Activated CD4-positive, alpha-beta memory T cell treated with anti-CD3 and anti-CD28 coated beads for 36 hours (primary cell): ENCODE measurements at regions of chr15 and their contacts with region 1.

Region 1: GRCh38 chr15:89874926-89875564 is 18.7 kb downstream of the AP3S2 start:
- DNase-seq: peak; percentile 89
- H3K4me3 Mint-ChIP-seq: no peak overlapping the region
- H3K27ac Mint-ChIP-seq: no peak overlapping the region
- H3K4me1 Mint-ChIP-seq: peaks cover 4% of the 10 kb centered on the region
- H3K27me3 Mint-ChIP-seq: no peaks in the 10 kb centered on the region

Region 2: DNA sequence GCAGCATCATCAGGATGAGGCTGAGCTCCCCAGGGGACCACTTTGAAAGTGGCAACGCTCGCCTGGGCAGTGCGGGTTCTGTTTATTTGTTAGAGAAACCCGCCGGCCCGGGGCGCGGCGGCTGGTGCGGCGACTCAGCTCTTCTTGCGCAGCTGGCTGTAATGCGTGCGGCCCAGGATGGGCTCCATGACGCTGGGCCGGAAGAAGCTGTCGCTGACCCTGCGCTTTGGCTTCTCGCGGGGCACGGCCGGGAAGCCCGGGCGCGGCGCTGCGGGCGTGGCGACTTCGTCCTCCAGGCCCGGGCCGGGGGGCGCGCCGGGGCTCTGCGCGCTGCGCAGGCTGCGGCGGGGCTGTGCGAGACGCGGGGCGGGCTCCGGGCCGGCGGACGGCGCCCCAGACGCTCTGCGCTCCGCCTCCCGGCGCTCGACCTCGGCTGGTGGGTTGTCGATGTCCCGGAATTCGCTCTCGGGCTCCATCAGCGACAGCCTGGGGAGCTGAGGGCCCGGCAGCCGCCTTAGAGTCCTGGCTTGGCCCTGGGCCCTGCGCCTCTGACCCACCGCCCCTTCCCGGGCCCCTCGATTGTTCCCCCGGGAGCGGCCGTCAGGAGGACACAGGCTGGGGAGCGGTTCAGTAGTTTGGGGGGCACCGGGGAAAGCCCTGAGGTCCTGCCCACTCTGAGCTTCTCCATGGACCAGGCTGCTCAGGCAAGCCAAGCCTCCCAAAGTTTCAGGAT is 209.4 kb before region 1 on chr15:
- CTCF ChIA-PET with region 1: no interaction called
- POLR2A ChIA-PET with region 1: no interaction called
- intact Hi-C with region 1: no loop called
- DNase-seq: peak; percentile 31
- H3K4me3 Mint-ChIP-seq: no peak overlapping the region
- H3K27ac Mint-ChIP-seq: no peak overlapping the region
- H3K4me1 Mint-ChIP-seq: peaks cover 4% of the 10 kb centered on the region
- H3K27me3 Mint-ChIP-seq: peaks cover 15% of the 10 kb centered on the region

Region 3: DNA sequence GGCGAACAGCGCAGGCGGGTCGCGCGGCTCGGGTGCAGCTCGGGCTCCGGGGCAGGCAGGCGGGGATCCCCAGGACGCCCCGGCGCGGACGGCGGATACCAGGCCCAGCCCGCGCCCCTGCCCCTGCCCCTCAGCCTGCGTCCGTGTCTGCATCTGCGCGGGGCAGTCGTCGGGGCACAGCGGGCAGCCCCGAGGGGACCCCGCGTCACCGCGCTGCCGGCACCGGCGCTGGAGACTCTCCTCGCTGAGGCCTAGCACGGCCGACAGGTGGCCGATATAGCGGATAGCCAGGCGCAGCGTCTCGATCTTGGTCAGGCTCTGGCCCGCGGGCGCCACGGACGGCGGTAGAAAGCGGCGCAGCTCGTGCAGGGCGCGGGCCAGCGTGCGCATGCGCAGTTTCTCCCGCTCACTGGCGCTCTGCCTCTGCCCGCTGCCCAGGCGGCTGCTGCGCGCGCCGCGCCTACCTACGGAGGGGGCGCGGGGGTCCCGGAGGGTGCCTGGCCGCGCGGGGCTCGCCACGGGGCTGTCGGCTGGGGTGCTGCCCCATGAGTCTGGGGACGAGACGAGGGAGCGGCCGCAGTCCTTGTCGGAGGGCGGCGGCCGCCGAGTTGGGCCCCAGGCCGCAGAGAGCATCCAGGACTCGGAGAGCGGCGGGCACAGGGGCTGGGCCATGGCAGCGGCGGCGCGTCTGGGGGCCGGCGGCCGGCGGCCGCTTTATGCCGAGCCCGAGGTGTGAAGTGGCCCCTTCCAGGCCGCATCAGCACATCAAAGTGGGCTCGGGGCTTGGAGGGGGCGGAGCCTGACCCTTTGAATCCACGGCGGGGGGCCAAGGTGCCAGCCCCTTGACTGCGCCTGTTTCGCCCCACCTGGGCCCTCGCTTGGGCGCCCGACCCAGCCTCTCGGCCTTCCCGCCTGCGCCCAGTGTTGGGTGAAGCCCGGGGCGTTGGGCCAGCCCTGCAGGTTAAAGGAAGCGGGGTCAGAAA is 124.2 kb before region 1 on chr15 and contains the start of gene MESP1:
- CTCF ChIA-PET with region 1: interaction called, 29 read pairs
- POLR2A ChIA-PET with region 1: no interaction called
- intact Hi-C with region 1: no loop called
- DNase-seq: peak; percentile 91
- H3K4me3 Mint-ChIP-seq: peak within 1 kb of the TSS; percentile 66
- H3K27ac Mint-ChIP-seq: no peak within 1 kb of the TSS
- H3K4me1 Mint-ChIP-seq: peaks cover 3% of the 10 kb centered on the region
- H3K27me3 Mint-ChIP-seq: peaks cover 6% of the 10 kb centered on the region
- total RNA-seq, gene MESP1: 4.6 to 6.7 TPM

Region 4: DNA sequence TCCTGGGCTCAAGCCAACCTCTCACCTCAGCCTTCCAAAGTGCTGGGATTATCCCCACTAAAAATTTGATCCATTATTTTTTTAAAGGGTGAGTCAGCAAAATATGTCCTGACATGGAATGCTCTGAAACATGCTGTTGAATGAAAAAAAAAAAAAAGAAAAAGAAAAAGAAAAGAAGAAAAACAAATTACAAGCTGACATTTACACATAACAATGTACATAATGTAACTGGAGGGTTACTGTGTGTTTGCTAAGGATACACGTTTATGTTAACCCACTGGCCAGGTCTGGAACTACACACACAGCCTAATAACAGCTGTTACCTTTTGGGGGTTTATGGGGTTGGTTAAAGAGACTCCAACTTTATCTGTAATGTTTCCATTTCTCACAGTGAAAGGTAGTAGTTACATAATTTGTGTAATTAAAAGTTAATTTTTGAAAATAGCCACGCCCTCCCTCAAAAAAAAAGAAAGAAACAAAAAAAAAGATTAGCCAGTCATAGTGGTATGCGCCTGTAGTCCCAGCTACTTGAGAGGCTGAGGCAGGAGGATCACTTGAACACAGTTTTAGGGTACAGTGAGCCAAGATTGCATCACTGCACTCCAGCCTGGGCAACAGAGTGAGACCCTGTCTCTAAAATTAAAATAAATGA is 102.0 kb before region 1 on chr15:
- CTCF ChIA-PET with region 1: interaction called, 19 read pairs
- POLR2A ChIA-PET with region 1: no interaction called
- intact Hi-C with region 1: no loop called
- DNase-seq: no peak
- H3K4me3 Mint-ChIP-seq: no peak overlapping the region
- H3K27ac Mint-ChIP-seq: no peak overlapping the region
- H3K4me1 Mint-ChIP-seq: no peaks in the 10 kb centered on the region
- H3K27me3 Mint-ChIP-seq: peaks cover 15% of the 10 kb centered on the region

Region 5: GRCh38 chr15:89863918-89864317 is 11.1 kb before region 1 on chr15:
- CTCF ChIA-PET with region 1: interaction called, 29 read pairs
- POLR2A ChIA-PET with region 1: no interaction called
- intact Hi-C with region 1: no loop called
- DNase-seq: no peak
- H3K4me3 Mint-ChIP-seq: no peak overlapping the region
- H3K27ac Mint-ChIP-seq: no peak overlapping the region
- H3K4me1 Mint-ChIP-seq: peaks cover 6% of the 10 kb centered on the region
- H3K27me3 Mint-ChIP-seq: no peaks in the 10 kb centered on the region

Region 6: GRCh38 chr15:89893696-89894455 is 18.8 kb after region 1 on chr15 and contains the start of gene AP3S2:
- CTCF ChIA-PET with region 1: interaction called, 86 read pairs
- POLR2A ChIA-PET with region 1: interaction called, 4 read pairs
- intact Hi-C with region 1: no loop called
- DNase-seq: peak; percentile 95
- H3K4me3 Mint-ChIP-seq: peak within 1 kb of the TSS; percentile 95
- H3K27ac Mint-ChIP-seq: peak within 1 kb of the TSS; percentile 98
- H3K4me1 Mint-ChIP-seq: peaks cover 56% of the 10 kb centered on the region
- H3K27me3 Mint-ChIP-seq: no peaks in the 10 kb centered on the region
- total RNA-seq, gene AP3S2: 17.2 to 23.5 TPM

Region 7: DNA sequence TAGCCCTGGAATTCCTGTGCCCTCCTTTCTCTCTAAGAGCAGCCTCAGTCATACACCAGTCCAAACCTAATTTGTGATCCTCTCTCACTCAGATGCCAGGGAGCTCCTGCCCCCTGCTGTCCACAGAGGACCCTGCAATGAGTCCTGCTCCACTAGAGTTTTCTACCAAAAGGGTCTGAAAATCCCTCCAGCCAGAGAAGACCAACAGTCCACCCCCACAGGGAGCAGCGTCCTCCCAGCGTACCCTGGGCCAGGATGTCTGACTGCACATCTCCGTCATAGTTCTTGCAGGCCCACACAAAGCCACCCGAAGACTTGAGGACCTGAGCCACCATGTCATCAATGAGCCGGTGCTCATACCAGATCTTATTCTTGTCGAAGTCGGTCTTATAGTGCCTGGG is 211.8 kb after region 1 on chr15:
- CTCF ChIA-PET with region 1: interaction called, 26 read pairs
- POLR2A ChIA-PET with region 1: no interaction called
- intact Hi-C with region 1: no loop called
- DNase-seq: peak; percentile 73
- H3K4me3 Mint-ChIP-seq: no peak overlapping the region
- H3K27ac Mint-ChIP-seq: peak overlapping the region; percentile 49
- H3K4me1 Mint-ChIP-seq: peaks cover 4% of the 10 kb centered on the region
- H3K27me3 Mint-ChIP-seq: no peaks in the 10 kb centered on the region

Region 8: GRCh38 chr15:90376789-90377188 is 501.7 kb after region 1 on chr15:
- CTCF ChIA-PET with region 1: no interaction called
- POLR2A ChIA-PET with region 1: no interaction called
- intact Hi-C with region 1: no loop called
- DNase-seq: peak; percentile 78
- H3K4me3 Mint-ChIP-seq: peak overlapping the region; percentile 42
- H3K27ac Mint-ChIP-seq: peak overlapping the region; percentile 91
- H3K4me1 Mint-ChIP-seq: peaks cover 34% of the 10 kb centered on the region
- H3K27me3 Mint-ChIP-seq: no peaks in the 10 kb centered on the region